GM18951 (cell line): ENCODE measurements at regions of chr1 and their contacts with region 1.

Region 1: GRCh38 chr1:210151052-210151672 is 81.4 kb upstream of the SERTAD4 start:
- POLR2A ChIP-seq: no peak

Region 2: GRCh38 chr1:210301615-210302000 is 150.4 kb after region 1 on chr1:
- in situ Hi-C with region 1: loop called (anchors 10 kb)
- POLR2A ChIP-seq: no peak

Region 3: GRCh38 chr1:210328746-210329503 is 177.8 kb after region 1 on chr1 and contains the start of gene HHAT:
- in situ Hi-C with region 1: no loop called
- POLR2A ChIP-seq: peak; percentile 68